Panc1 (cell line): ENCODE measurements at regions of chr9 and their contacts with region 1.

Region 1: GRCh38 chr9:133532937-133533668 is 1.4 kb upstream of the ADAMTSL2 start:
- DNase-seq: peak; percentile 10
- ATAC-seq: peak; percentile 82
- H3K4me3 ChIP-seq: no peak overlapping the region
- H3K27ac ChIP-seq: no peak overlapping the region
- H3K4me1 ChIP-seq: no peaks in the 10 kb centered on the region; the same call in 1 of the 2 replicates
- H3K27me3 ChIP-seq: no peaks in the 10 kb centered on the region
- CTCF ChIP-seq: peak; percentile 79

Region 2: DNA sequence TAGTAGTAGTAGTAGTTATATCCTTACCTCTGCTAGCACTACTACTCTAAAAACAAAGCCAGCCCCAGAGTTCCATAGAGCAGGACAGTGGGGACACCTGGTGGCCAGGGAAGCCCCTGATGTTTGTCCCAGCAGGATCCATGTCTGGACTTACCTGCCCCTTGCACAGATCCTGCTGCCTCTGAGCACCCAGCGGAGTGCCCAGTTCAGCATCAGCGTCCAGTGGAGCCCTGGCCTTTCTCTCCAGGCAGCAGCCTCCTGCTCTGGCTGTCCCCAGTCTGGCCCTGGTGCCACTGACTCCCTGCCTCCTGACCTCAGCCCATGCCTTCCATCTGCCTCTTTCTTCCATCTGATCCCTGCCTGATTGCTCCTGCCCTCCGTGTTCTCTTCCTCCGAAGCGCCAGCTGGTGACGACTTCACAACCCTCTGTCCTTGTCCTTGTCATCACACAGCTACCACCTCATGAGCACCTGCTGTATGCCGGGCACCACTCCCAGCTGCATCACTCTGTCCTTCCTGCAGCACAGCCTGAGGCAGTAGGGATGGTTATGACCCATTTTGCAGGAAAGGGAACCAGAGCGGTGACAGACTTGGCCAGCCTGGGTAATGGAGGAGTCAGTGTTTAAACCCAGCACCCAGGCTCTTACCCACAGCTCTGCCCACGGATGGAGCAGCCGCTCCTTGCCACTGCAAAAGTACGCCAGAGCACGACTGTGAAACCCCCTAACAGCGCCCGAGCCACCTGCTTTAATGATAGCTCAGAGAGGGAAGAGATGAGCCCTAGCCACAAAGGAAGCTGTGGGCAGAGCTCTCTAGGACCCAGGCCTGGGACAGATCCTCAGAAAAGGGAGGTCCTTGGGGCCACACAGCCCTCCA is 193.5 kb after region 1 on chr9:
- CTCF ChIA-PET with region 1: no interaction called
- POLR2A ChIA-PET with region 1: no interaction called
- in situ Hi-C with region 1: no loop called
- intact Hi-C with region 1: loop called (anchors 1 kb)
- DNase-seq: no peak
- ATAC-seq: peak; percentile 88
- H3K4me3 ChIP-seq: no peak overlapping the region
- H3K27ac ChIP-seq: no peak overlapping the region
- H3K4me1 ChIP-seq: peaks cover 2% of the 10 kb centered on the region; the same call in 1 of the 2 replicates
- H3K27me3 ChIP-seq: peaks cover 4% of the 10 kb centered on the region
- CTCF ChIP-seq: peak; percentile 63